Caco-2 (cell line): ENCODE measurements at regions of chr5 and their contacts with region 1.

Region 1: GRCh38 chr5:173331956-173332479 is 3.8 kb upstream of the STC2 start:
- DNase-seq: peak; percentile 90 to 93
- H3K4me3 ChIP-seq: no peak overlapping the region
- H3K4me3 Mint-ChIP-seq: peak overlapping the region; percentile 91
- H3K27ac Mint-ChIP-seq: peak overlapping the region; percentile 97
- H3K4me1 ChIP-seq: peaks cover 19% of the 10 kb centered on the region
- H3K4me1 Mint-ChIP-seq: peaks cover 15% of the 10 kb centered on the region
- H3K27me3 ChIP-seq: no peaks in the 10 kb centered on the region
- H3K27me3 Mint-ChIP-seq: no peaks in the 10 kb centered on the region
- CTCF ChIP-seq: peak; percentile 91 to 95

Region 2: GRCh38 chr5:172984243-172984953 is 347.6 kb before region 1 on chr5:
- CTCF ChIA-PET with region 1: interaction called, 10 read pairs
- POLR2A ChIA-PET with region 1: interaction called, 4 read pairs
- intact Hi-C with region 1: loop called (anchors 5 kb)
- DNase-seq: peak; percentile 78 to 79
- H3K4me3 ChIP-seq: peak overlapping the region; percentile 94
- H3K4me3 Mint-ChIP-seq: peak overlapping the region; percentile 87
- H3K27ac Mint-ChIP-seq: peak overlapping the region; percentile 95
- H3K4me1 ChIP-seq: peaks cover 11% of the 10 kb centered on the region
- H3K4me1 Mint-ChIP-seq: peaks cover 7% of the 10 kb centered on the region
- H3K27me3 ChIP-seq: no peaks in the 10 kb centered on the region
- H3K27me3 Mint-ChIP-seq: no peaks in the 10 kb centered on the region
- CTCF ChIP-seq: peak; percentile 33 to 72

Region 3: GRCh38 chr5:173144200-173145176 is 187.5 kb before region 1 on chr5 and contains the start of gene BNIP1:
- CTCF ChIA-PET with region 1: no interaction called
- POLR2A ChIA-PET with region 1: interaction called, 10 read pairs
- intact Hi-C with region 1: no loop called
- DNase-seq: peak; percentile 97 to 99
- H3K4me3 ChIP-seq: peak within 1 kb of the TSS; percentile 86
- H3K4me3 Mint-ChIP-seq: peak within 1 kb of the TSS; percentile 100
- H3K27ac Mint-ChIP-seq: peak within 1 kb of the TSS; percentile 100
- H3K4me1 ChIP-seq: peaks cover 3% of the 10 kb centered on the region; the same call in 1 of the 2 replicates
- H3K4me1 Mint-ChIP-seq: peaks cover 7% of the 10 kb centered on the region
- H3K27me3 ChIP-seq: no peaks in the 10 kb centered on the region
- H3K27me3 Mint-ChIP-seq: no peaks in the 10 kb centered on the region
- CTCF ChIP-seq: peak; percentile 78 to 98
- total RNA-seq, gene BNIP1: 13.9 and 15.3 TPM in 2 replicates

Region 4: GRCh38 chr5:173256800-173257199 is 75.2 kb before region 1 on chr5:
- CTCF ChIA-PET with region 1: no interaction called
- POLR2A ChIA-PET with region 1: no interaction called
- intact Hi-C with region 1: no loop called
- DNase-seq: no peak
- H3K4me3 ChIP-seq: no peak overlapping the region
- H3K4me3 Mint-ChIP-seq: no peak overlapping the region
- H3K27ac Mint-ChIP-seq: no peak overlapping the region
- H3K4me1 ChIP-seq: no peaks in the 10 kb centered on the region
- H3K4me1 Mint-ChIP-seq: no peaks in the 10 kb centered on the region
- H3K27me3 ChIP-seq: no peaks in the 10 kb centered on the region; the same call in none of the 2 replicates
- H3K27me3 Mint-ChIP-seq: peaks cover 19% of the 10 kb centered on the region
- CTCF ChIP-seq: no peak

Region 5: GRCh38 chr5:173293817-173294672 is 38.0 kb before region 1 on chr5:
- CTCF ChIA-PET with region 1: interaction called, 120 read pairs
- POLR2A ChIA-PET with region 1: interaction called, 9 read pairs
- intact Hi-C with region 1: loop called (anchors 1 kb)
- DNase-seq: peak; percentile 82 to 88
- H3K4me3 ChIP-seq: no peak overlapping the region
- H3K4me3 Mint-ChIP-seq: peak overlapping the region; percentile 62
- H3K27ac Mint-ChIP-seq: peak overlapping the region; percentile 44
- H3K4me1 ChIP-seq: peaks cover 35% of the 10 kb centered on the region
- H3K4me1 Mint-ChIP-seq: peaks cover 20% of the 10 kb centered on the region
- H3K27me3 ChIP-seq: no peaks in the 10 kb centered on the region; the same call in 1 of the 2 replicates
- H3K27me3 Mint-ChIP-seq: no peaks in the 10 kb centered on the region
- CTCF ChIP-seq: peak; percentile 92 to 93

Region 6: DNA sequence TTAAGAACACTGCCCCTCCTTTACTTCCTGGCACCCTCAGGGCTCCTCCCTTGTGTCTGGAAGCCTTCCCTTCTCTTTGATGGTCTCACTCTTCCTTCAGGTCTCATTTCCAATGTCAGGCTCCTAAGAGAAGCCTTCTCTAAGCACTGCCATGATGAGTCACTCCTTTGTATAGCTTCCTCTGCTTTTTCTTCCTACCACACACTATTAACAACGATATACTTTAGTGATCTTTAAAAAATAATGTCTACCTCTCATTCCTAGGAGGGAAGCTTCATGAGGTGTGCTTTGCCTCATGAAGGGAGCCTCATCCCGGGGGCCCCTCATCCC is 204.3 kb after region 1 on chr5:
- CTCF ChIA-PET with region 1: no interaction called
- POLR2A ChIA-PET with region 1: no interaction called
- intact Hi-C with region 1: loop called (anchors 5 kb)
- DNase-seq: no peak
- H3K4me3 ChIP-seq: no peak overlapping the region
- H3K4me3 Mint-ChIP-seq: peak overlapping the region; percentile 0
- H3K27ac Mint-ChIP-seq: peak overlapping the region; percentile 34
- H3K4me1 ChIP-seq: peaks cover 35% of the 10 kb centered on the region
- H3K4me1 Mint-ChIP-seq: peaks cover 18% of the 10 kb centered on the region
- H3K27me3 ChIP-seq: no peaks in the 10 kb centered on the region
- H3K27me3 Mint-ChIP-seq: no peaks in the 10 kb centered on the region
- CTCF ChIP-seq: no peak

Region 7: DNA sequence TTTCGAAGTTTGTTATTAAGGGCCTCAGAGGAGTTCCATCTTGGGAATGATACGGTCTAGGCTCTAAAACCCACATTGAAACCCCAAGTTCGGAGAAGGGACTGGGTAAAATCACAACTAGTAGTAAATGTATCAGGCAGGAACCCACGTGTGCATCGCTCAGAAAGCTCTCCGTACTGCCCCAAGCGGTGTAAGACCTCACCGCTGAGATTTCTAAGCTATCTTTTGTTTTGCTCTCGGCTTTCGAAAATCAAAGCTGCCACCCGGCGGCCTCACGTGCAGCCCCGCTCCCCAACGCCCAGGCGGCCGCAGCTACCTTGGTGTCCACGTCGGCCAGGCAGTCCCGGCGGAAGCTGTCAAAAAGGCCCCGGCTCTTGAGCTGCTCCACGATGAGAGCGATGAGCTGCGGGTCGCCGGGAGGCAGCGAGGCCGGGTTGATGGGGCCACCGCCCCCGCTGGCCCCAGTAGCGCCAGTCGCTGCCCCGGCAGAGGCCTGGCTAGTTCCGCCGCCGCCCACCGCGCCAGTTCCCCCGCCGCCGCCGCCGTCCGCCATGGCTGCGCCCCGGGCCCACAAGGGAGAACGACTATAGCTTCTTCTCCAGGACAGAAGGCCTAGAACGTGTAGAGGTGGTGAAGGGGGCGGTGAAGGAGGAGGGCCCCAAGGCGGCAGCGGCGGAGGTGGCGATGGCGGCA is 284.0 kb after region 1 on chr5:
- CTCF ChIA-PET with region 1: interaction called, 7 read pairs
- POLR2A ChIA-PET with region 1: interaction called, 14 read pairs
- intact Hi-C with region 1: loop called (anchors 2 kb)
- DNase-seq: peak; percentile 75 to 84
- H3K4me3 ChIP-seq: peak overlapping the region; percentile 90
- H3K4me3 Mint-ChIP-seq: peak overlapping the region; percentile 89
- H3K27ac Mint-ChIP-seq: peak overlapping the region; percentile 94
- H3K4me1 ChIP-seq: peaks cover 20% of the 10 kb centered on the region
- H3K4me1 Mint-ChIP-seq: peaks cover 23% of the 10 kb centered on the region
- H3K27me3 ChIP-seq: no peaks in the 10 kb centered on the region
- H3K27me3 Mint-ChIP-seq: no peaks in the 10 kb centered on the region
- CTCF ChIP-seq: peak; percentile 61 to 64